Tibial artery (tissue), 4 donors: ENCODE measurements at regions of chr22 and their contacts with region 1.

Region 1: DNA sequence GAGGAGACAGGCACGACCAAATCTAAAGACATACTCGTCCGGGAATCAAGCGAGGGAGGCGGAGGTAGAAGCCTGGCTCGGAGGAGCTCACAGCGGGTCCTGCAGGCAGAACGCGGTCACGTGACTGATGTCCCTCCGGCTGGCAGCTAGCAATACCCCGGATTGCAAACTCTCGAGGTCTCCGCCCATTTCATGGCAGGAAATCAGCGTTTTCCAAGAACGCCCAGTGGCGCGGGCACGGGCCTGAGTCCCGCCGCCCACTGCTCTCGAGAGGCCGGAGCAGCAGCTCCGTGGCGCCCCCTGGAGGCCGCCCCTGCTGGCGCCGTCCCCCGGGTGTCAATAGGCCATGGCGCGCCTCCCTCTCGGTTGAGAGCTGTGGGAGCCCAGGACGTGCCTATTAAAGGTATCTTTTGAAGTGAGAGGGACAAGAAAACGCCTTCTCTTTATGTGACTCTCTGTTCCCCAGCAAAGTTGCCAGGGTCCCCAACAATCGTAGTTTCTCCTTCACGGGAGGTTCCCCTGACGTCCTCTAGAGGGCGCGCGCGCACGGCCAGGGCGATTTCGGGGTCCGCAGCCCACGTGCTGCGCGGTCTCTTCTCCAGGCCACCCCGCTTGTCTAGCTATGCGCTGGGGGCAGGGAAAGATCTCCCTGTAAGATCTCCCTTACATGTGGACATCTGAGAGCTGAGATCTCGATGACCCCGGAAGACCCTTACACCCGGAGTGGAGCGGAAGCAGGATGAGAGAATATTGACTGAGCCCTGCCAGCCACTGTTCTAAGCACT is 37.3 kb upstream of the RBFOX2 start:
- DNase-seq: peak; percentile 89 to 97
- H3K4me3 ChIP-seq: peak overlapping the region; percentile 50 to 56
- H3K27ac ChIP-seq: peak overlapping the region; percentile 79 to 85
- H3K4me1 ChIP-seq: peaks cover 0 to 5% (median 3%) of the 10 kb centered on the region in 4 donors
- H3K27me3 ChIP-seq: no peaks in the 10 kb centered on the region
- CTCF ChIP-seq: peak; percentile 99 to 100

Region 2: DNA sequence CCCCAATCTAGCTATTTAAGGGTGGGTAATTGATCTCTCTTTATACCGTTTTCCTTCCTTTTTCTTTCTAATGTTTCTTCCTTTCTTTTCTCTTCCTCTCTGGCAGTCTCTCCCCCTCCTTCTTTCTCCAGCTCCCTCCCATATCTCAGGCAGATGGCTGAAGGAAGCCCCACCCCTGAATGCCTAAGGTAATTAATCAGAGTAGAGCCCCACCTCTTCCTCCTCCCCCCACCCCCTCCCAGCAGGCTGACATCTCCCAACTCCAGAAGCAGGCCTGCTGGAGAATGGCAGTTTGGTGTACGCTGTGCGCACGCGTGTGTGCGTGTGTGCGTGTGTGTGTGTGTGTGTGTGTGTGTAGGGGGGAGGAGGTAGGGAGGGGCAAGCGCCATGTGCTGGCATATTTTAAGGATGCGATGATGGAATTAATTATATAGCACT is 225.6 kb before region 1 on chr22:
- intact Hi-C with region 1: no loop called
- DNase-seq: peak; percentile 83 to 90
- H3K4me3 ChIP-seq: peak overlapping the region; percentile 48 to 57
- H3K27ac ChIP-seq: peak overlapping the region; percentile 64 to 66
- H3K4me1 ChIP-seq: peaks cover 0 to 63% (median 26%) of the 10 kb centered on the region in 4 donors
- H3K27me3 ChIP-seq: no peaks in the 10 kb centered on the region
- CTCF ChIP-seq: no peak

Region 3: DNA sequence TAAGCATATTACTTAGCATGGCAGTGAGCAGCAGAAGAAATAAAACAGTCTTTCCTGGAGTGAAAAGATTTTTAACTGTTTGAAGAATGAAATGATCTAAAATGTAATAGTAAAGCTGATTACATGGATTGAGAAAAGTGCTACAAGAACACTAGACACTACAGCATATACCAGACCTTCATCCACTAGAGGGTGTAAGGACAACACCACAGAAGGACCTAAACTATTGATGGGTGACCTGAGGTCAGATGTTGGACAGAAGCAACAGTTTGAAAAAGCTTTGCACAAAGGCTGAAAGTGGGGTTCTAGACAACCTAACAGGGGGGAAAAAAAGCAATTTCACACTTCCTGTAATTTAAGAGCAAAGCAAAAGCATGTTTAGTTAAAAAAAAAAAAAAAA is 135.0 kb before region 1 on chr22:
- intact Hi-C with region 1: loop called (anchors 5 kb)
- DNase-seq: no peak
- H3K4me3 ChIP-seq: no peak overlapping the region
- H3K27ac ChIP-seq: no peak overlapping the region
- H3K4me1 ChIP-seq: peaks cover 0 to 8% (median 0%) of the 10 kb centered on the region in 4 donors
- H3K27me3 ChIP-seq: no peaks in the 10 kb centered on the region
- CTCF ChIP-seq: peak; percentile 60 to 75

Region 4: GRCh38 chr22:36028646-36029405 is 37.1 kb before region 1 on chr22 and contains the start of gene RBFOX2:
- intact Hi-C with region 1: loop called (anchors 2 kb)
- DNase-seq: peak; percentile 96 to 98
- H3K4me3 ChIP-seq: peak within 1 kb of the TSS; percentile 62 to 80
- H3K27ac ChIP-seq: peak within 1 kb of the TSS; percentile 88 to 92
- H3K4me1 ChIP-seq: peaks cover 0 to 24% (median 15%) of the 10 kb centered on the region in 4 donors
- H3K27me3 ChIP-seq: no peaks in the 10 kb centered on the region
- CTCF ChIP-seq: no peak

Region 5: GRCh38 chr22:37623075-37624016 is 1557.4 kb after region 1 on chr22:
- intact Hi-C with region 1: no loop called
- DNase-seq: peak in 1 of 2 donors; percentile 76
- H3K4me3 ChIP-seq: no peak overlapping the region
- H3K27ac ChIP-seq: peak overlapping the region in 1 of 2 donors; percentile 11
- H3K4me1 ChIP-seq: peaks cover 0 to 26% (median 14%) of the 10 kb centered on the region in 4 donors
- H3K27me3 ChIP-seq: no peaks in the 10 kb centered on the region
- CTCF ChIP-seq: peak; percentile 50 to 90